AG04449 (cell line): ENCODE measurements at regions of chr10 and their contacts with region 1.

Region 1: DNA sequence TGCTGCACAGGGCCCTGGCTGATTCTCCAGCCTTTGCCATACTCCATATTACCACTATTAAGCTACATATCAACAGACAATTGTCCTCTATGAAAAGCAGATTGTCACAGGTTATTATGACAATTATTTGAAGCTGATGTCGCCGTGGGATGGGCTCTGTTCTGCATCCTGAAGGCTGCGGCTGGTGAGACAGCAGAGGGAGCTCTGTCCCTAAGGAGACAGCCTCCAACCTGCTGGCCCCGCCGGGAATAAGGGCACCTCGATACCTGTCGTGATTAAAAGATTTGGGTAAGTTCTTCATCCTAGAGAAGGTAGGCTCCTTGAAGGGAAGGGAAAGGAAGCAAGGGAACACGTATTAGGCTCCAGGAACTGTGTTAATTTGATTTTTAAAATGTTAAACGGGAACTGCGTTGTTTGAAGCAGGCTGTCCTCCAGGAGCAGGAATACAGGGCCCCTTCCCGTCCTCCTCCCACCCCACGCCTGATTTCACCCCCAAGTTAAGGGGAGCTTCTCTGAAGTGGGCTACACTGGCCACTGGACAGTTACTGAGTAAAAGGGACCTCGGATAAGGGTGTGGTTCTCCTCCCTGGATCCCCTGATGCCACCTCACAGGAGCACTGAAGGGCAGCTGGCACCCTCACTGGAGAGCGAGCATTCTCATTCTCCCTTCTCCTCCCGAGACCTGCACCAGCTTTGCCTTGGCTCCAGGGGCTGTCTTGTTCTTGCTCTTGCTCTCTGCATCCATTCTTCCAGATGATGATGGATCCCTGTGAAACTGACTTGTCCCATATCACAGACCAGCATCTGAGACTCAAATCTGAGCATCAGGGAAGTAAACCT is 11.8 kb upstream of the TIAL1 start:
- DNase-seq: no peak
- H3K4me3 ChIP-seq: no peak overlapping the region
- CTCF ChIP-seq: peak; percentile 59

Region 2: GRCh38 chr10:119650692-119651513 is 42.4 kb after region 1 on chr10 and contains the start of gene BAG3:
- CTCF ChIA-PET with region 1: interaction called, 13 read pairs
- POLR2A ChIA-PET with region 1: no interaction called
- DNase-seq: peak; percentile 31
- H3K4me3 ChIP-seq: peak within 1 kb of the TSS; percentile 93
- CTCF ChIP-seq: no peak

Region 3: GRCh38 chr10:119667562-119668328 is 59.2 kb after region 1 on chr10:
- CTCF ChIA-PET with region 1: interaction called, 12 read pairs
- POLR2A ChIA-PET with region 1: no interaction called
- DNase-seq: peak; percentile 79
- H3K4me3 ChIP-seq: peak overlapping the region; percentile 33
- CTCF ChIP-seq: peak; percentile 14